Right lobe of liver (tissue), 6 donors: ENCODE measurements at regions of chr7 and their contacts with region 1.

Region 1: DNA sequence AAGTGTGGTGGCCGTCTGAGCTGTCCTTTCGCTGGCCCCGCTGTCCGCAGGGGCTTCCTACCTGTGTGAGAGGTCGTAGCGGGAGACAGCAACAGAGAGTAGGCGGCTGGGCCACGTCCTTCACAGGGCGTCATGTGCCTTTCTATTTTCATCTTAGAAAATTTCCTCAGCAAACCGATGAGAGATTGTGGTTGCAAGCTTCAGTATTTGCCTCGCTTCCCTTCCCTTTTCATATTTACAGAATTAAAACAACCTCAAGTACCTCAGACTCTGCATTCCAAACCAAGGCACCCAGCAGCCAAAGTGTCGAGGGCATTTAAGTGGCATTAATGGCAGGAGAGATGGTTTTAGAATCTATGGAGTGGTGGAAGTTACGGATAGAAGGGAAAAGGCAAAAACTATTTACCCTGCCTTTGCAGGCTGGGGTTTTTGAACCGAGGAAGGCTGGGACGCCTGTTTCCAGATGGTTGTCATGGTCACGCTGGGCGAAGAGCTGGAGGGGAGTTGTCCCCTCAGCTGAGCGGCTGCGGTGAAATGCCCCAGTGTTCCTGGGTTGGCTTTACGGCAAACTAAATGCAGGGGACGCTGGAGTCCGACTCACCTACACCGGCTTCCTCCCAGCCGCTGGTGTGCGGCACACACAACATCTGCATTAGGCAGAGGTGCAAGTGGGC is 41.9 kb downstream of the WIPI2 start:
- DNase-seq: peak in 1 of 3 donors; percentile 47
- ATAC-seq: peak in 2 of 4 donors; percentile 35 to 43
- H3K4me3 ChIP-seq: no peak overlapping the region
- H3K27ac ChIP-seq: no peak overlapping the region
- H3K4me1 ChIP-seq: no peaks in the 10 kb centered on the region
- H3K27me3 ChIP-seq: no peaks in the 10 kb centered on the region
- CTCF ChIP-seq: no peak
- POLR2A ChIP-seq: no peak

Region 2: DNA sequence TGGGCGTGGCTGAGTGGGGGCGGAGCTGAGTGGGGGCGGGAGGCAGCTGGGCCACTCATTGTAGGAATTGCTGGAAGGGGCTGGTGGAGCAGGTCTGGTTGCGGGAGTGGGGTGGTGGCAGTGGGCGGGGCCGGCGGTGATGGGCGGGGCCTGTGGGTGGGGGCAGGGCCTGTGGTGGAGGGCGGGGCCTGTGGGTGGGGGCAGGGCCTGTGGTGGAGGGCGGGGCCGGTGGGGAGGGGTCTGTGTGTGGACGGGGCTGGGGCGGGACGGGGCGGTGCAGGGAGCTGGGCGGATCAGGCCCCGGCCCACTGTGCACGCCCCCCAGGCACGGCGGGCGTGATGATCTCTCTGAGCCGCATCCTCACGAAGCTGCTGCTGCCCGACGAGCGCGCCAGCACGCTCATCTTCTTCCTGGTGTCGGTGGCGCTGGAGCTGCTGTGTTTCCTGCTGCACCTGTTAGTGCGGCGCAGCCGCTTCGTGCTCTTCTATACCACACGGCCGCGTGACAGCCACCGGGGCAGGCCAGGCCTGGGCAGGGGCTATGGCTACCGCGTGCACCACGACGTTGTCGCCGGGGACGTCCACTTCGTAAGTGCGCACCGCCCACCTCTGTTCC is 64.8 kb after region 1 on chr7:
- intact Hi-C with region 1: no loop called
- DNase-seq: no peak
- ATAC-seq: peak in 3 of 4 donors; percentile 24 to 33 (median 29)
- H3K4me3 ChIP-seq: no peak overlapping the region
- H3K27ac ChIP-seq: no peak overlapping the region
- H3K4me1 ChIP-seq: no peaks in the 10 kb centered on the region
- H3K27me3 ChIP-seq: no peaks in the 10 kb centered on the region
- CTCF ChIP-seq: no peak
- POLR2A ChIP-seq: no peak

Region 3: GRCh38 chr7:5450549-5451372 is 218.8 kb after region 1 on chr7:
- intact Hi-C with region 1: loop called in 1 of 2 experiments (anchors 10 kb)
- DNase-seq: peak; percentile 58 to 69 (median 64)
- ATAC-seq: peak; percentile 72 to 84 (median 76)
- H3K4me3 ChIP-seq: no peak overlapping the region
- H3K27ac ChIP-seq: no peak overlapping the region
- H3K4me1 ChIP-seq: peaks cover 0 to 6% (median 0%) of the 10 kb centered on the region in 4 donors
- H3K27me3 ChIP-seq: no peaks in the 10 kb centered on the region
- CTCF ChIP-seq: peak; percentile 67 to 72 (median 71)
- POLR2A ChIP-seq: no peak

Region 4: DNA sequence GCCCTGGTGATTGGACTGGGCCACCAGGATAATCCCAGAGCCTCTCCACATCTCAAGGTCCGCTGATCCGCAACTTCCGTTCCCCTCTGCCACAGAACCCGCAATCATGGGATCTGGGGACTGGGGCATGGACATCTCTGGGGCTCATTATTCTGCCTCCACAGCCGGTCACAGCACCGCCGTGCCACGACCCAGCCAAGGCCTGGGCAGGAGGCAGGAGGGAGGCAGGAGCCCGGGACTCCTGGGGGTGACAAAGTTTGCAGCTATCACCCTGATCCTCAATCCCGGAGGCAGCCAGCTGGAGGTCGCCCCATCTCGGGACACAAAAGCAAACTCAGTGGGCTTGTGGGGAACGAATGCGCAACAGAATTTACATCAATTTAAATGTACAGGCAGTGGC is 234.6 kb after region 1 on chr7:
- intact Hi-C with region 1: no loop called
- DNase-seq: no peak
- ATAC-seq: peak in 1 of 4 donors; percentile 20
- H3K4me3 ChIP-seq: no peak overlapping the region
- H3K27ac ChIP-seq: no peak overlapping the region
- H3K4me1 ChIP-seq: no peaks in the 10 kb centered on the region
- H3K27me3 ChIP-seq: no peaks in the 10 kb centered on the region
- CTCF ChIP-seq: no peak
- POLR2A ChIP-seq: no peak